ENCODE measurements at regions of chr6 and their contacts with region 1.

Region 1: DNA sequence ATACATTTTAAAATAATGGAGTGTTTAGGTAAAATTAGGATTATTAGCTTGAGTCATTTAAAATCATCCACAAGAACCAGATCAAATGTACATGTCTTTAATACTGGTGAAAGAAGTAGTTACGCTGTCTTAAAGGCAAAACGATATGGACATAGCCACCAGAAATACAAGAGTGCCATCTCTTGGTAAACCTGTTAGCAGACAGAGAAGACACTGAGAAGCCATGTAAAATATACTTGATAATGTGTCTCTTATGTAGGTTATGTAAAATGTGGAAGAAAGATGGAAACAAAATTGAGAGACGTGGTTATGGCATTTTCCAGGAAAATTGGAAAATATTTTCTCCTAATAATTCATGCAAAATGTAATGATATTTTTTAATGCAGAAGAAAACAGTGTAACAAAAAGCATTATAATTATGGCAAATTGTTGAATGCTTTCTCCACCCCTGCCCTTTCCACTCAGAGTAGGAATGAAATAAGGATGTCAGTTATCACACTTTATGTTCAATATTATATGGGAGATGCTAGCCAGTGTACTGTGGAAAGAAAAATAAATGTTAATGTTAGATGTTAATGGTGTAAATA is 12.2 kb upstream of the SLC17A2 start:
- DNase-seq: peak; percentile 62
- H3K4me3 ChIP-seq: no peak overlapping the region
- H3K27ac ChIP-seq: no peak overlapping the region
- H3K4me1 ChIP-seq: no peaks in the 10 kb centered on the region
- CTCF ChIP-seq: peak; percentile 87

Region 2: DNA sequence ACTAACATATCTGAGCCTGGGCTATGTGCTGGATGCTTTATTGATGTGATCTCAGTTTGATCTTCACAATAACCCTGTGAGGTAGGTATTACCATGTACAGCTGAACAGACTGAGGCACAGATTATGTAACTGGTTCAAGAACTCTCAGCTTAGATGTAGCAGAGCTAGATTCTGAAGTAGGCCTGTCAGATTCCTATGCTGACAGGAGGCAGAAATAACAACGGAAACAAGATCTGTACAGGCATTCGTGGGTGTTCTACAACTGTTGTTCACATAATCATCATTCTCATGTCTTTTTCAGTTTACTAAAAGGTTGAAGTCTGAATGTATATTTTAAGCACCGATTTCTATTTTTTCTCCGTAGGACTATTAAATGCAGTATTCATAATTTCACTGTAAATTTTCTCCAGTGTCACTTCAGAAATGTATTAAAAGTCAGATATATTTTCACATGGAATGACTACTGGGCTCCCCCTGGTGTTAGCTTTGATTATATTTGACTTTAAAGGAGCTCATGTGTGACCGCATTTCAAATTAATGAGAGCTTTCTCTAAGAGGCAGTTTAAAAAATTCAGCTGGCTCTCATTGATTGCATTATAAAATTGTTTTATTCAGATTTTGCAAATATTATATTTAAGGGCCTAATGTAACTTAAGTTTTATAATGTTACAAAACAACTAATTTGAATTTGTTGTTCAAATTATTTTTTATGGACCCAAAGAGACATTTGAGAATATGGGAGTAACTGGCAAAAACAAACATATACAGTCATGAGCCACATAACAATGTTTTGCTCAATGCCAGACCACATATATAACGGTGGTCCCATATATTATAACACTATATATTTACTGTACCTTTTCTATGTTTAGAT is 224.6 kb before region 1 on chr6:
- CTCF ChIA-PET with region 1: no interaction called
- POLR2A ChIA-PET with region 1: no interaction called
- intact Hi-C with region 1: loop called (anchors 2 kb)
- DNase-seq: peak; percentile 59
- H3K4me3 ChIP-seq: no peak overlapping the region
- H3K27ac ChIP-seq: no peak overlapping the region
- H3K4me1 ChIP-seq: no peaks in the 10 kb centered on the region
- CTCF ChIP-seq: peak; percentile 91